Calu3 (cell line): ENCODE measurements at regions of chr7 and their contacts with region 1.

Region 1: DNA sequence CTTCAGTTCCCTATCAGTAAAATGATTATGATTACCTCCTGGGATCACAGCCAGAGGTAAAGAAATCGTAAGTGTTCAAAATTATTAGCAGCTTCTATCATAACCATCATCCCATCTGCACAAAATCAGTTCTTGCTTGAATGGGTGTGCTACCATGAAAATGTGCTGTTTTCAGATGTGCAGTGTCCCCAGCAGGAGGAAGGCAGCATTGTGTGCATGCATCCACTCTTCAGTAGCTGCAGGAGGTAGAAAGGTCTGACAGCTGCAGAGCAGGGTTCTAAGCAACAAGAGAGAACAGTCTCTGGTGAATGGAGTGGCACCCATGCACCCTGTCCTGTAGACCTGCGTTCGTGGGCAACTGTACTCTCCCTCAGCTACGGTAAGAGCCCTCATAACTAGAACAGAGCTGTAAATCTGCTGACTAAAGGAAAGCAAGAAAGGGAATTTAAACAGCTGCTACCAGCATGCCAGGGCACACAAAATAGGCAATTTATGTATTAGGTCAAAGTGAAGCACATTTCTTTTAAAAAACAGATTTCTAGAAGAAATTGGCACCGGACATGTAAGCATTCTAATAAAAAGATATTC is 21.2 kb downstream of the VSTM2A start:
- DNase-seq: no peak
- H3K4me3 Mint-ChIP-seq: no peak overlapping the region
- H3K27ac Mint-ChIP-seq: no peak overlapping the region
- H3K4me1 Mint-ChIP-seq: peaks cover 8% of the 10 kb centered on the region
- H3K27me3 Mint-ChIP-seq: no peaks in the 10 kb centered on the region
- CTCF ChIP-seq: no peak

Region 2: GRCh38 chr7:54109501-54109900 is 453.9 kb before region 1 on chr7:
- CTCF ChIA-PET with region 1: no interaction called
- intact Hi-C with region 1: no loop called
- DNase-seq: no peak
- H3K4me3 Mint-ChIP-seq: no peak overlapping the region
- H3K27ac Mint-ChIP-seq: no peak overlapping the region
- H3K4me1 Mint-ChIP-seq: no peaks in the 10 kb centered on the region
- H3K27me3 Mint-ChIP-seq: no peaks in the 10 kb centered on the region
- CTCF ChIP-seq: no peak

Region 3: GRCh38 chr7:54678763-54679489 is 115.5 kb after region 1 on chr7:
- CTCF ChIA-PET with region 1: no interaction called
- intact Hi-C with region 1: loop called (anchors 5 kb)
- DNase-seq: no peak
- H3K4me3 Mint-ChIP-seq: no peak overlapping the region
- H3K27ac Mint-ChIP-seq: no peak overlapping the region
- H3K4me1 Mint-ChIP-seq: no peaks in the 10 kb centered on the region
- H3K27me3 Mint-ChIP-seq: peaks cover 76% of the 10 kb centered on the region
- CTCF ChIP-seq: no peak

Region 4: DNA sequence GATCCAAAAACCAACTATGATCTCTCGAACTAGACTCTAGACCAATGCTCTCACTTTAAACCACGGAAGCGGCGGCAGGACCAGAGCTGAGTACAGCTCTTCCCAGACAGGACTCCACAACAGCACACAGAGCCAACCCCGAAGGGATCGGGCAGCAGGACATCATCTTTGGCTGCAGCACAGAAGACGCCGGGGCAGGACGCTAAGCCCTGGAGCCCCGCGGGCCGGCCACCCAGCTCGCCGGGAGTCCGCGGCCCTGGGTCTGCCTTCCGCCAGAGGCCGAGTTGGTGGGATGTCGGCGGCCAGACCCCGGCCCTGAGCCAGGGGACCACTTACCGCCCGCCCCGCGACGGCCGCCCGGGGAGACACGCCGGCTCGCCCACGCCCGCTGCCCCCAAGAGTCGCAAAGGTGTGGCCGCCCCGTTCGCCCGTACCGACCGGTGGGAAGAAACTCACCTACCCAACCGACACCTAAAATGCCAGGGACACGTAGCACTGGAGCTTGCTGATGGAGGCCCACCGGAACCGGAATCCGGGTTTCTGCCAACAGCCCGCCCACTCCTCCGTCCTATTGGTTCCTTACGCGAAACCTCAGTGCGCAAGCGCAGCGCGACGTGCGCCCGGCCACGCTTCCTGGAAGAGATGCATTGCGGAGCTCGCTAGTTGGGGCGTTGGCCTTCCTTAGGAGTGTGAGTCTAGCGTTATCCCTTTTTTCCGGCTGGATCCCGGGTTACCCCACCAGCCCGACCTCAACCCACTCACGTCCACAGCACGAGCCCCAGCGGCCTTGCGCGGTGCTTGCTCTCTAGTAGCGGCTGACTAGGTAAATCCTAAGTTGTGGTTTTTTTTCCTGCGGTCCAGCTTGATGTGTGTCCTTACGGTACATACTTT is 195.5 kb after region 1 on chr7 and contains the start of gene SEC61G:
- CTCF ChIA-PET with region 1: no interaction called
- intact Hi-C with region 1: loop called (anchors 5 kb)
- DNase-seq: peak; percentile 99
- H3K4me3 Mint-ChIP-seq: peak within 1 kb of the TSS; percentile 99
- H3K27ac Mint-ChIP-seq: peak within 1 kb of the TSS; percentile 99
- H3K4me1 Mint-ChIP-seq: peaks cover 23% of the 10 kb centered on the region
- H3K27me3 Mint-ChIP-seq: peaks cover 8% of the 10 kb centered on the region
- CTCF ChIP-seq: no peak
- total RNA-seq, gene SEC61G: 198 and 202 TPM in 2 replicates